ENCODE measurements at regions of chr1 and their contacts with region 1.

Region 1: GRCh38 chr1:186887203-186887602 is 58.5 kb downstream of the PLA2G4A start:
- DNase-seq: no peak
- H3K4me3 Mint-ChIP-seq: no peak overlapping the region
- H3K27ac Mint-ChIP-seq: peak overlapping the region; percentile 78
- H3K4me1 Mint-ChIP-seq: peaks cover 22% of the 10 kb centered on the region
- H3K27me3 Mint-ChIP-seq: no peaks in the 10 kb centered on the region

Region 2: DNA sequence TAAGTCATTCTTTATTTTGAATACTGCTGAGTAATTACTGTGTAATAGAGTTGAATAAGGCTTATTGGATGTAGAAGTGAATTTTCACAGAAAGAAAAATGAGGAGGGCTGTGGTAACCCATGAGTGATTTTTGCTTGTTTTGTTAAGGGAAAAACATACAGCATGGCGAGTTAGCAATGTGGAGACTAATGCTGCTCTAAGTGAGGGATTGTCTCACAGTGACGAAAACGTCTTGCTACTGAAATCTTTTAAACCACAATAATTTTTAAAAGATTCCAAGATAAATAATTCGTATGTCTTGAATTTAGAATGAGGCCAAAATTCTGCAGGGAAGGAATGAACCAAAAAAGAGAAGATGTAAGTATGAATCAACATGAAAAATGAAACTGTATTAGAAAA is 74.6 kb before region 1 on chr1:
- intact Hi-C with region 1: loop called (anchors 5 kb)
- DNase-seq: no peak
- H3K4me3 Mint-ChIP-seq: no peak overlapping the region
- H3K27ac Mint-ChIP-seq: no peak overlapping the region
- H3K4me1 Mint-ChIP-seq: peaks cover 13% of the 10 kb centered on the region
- H3K27me3 Mint-ChIP-seq: peaks cover 3% of the 10 kb centered on the region

Region 3: DNA sequence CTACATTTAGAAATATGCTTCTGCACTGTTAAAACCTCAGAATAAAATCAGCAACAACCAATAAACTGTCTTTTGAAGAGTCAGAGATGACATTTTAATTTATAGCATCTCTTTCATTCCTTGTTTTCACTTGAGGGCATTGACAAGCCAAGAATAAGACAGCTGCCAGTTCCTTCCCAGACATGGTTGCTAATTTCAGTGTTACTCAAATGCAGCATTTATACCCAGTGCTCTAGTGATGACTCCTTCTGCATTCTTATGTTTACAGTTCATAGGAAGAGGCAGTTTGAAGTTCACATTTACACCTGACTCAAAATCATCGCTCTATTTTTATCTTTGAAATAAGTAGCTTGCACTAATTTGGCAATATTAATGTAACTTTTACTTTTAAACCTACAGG is 13.5 kb before region 1 on chr1:
- intact Hi-C with region 1: loop called (anchors 2 kb)
- DNase-seq: no peak
- H3K4me3 Mint-ChIP-seq: no peak overlapping the region
- H3K27ac Mint-ChIP-seq: peak overlapping the region; percentile 66
- H3K4me1 Mint-ChIP-seq: peaks cover 42% of the 10 kb centered on the region
- H3K27me3 Mint-ChIP-seq: no peaks in the 10 kb centered on the region

Region 4: GRCh38 chr1:187294421-187295201 is 407.4 kb after region 1 on chr1:
- intact Hi-C with region 1: no loop called
- DNase-seq: no peak
- H3K4me3 Mint-ChIP-seq: no peak overlapping the region
- H3K27ac Mint-ChIP-seq: no peak overlapping the region
- H3K4me1 Mint-ChIP-seq: no peaks in the 10 kb centered on the region
- H3K27me3 Mint-ChIP-seq: no peaks in the 10 kb centered on the region